Activated B cell treated with CpG ODN at 0.5 μM for 24 hours (primary cell): ENCODE measurements at regions of chr19 and their contacts with region 1.

Region 1: DNA sequence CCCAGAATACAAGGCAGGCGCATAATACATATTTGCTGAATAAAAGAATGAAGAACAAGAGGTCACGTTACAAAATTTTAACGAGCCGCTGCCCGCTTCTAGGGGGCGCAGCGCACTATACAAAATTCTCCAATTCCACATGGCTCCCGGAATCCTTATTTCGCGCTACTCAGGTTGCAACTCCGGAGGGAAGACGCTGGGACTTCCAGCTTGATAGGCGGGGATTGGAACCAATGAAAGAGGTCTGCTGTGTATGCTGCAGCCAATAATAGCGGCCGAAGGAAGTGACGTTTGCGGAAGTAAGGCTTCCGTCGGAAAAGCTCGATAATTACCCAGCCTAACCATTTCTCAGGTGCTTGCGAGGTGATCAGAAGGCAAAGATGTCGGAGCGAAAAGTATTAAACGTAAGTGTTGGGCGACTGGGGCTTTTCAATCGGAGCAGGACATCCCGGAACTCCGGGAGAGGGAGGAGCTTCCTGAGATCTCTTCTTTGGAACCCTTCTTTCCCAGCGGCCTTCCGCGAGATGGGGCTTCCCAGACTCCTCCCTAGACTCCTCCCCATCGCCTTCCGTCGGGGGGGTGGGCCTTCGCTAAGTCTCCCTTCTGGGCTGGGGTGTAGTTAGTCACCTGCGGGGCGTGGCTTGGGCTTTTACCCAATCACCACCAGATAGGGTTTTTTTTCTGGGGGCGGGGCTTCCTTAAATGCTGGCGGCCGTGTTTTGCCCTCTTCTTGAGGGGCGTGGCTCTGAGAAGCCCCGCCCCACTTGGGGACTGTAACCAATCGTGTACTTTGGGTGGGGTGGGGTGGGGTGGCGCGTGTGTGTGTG is at the start of gene YJU2:
- DNase-seq: peak; percentile 89
- ATAC-seq: peak; percentile 96
- H3K4me3 Mint-ChIP-seq: peak within 1 kb of the TSS; percentile 90
- H3K27ac Mint-ChIP-seq: peak within 1 kb of the TSS; percentile 96
- H3K4me1 Mint-ChIP-seq: peaks cover 35% of the 10 kb centered on the region
- H3K27me3 Mint-ChIP-seq: no peaks in the 10 kb centered on the region
- CTCF ChIP-seq: no peak
- total RNA-seq, gene YJU2: 40.7 and 43.0 TPM in 2 replicates

Region 2: DNA sequence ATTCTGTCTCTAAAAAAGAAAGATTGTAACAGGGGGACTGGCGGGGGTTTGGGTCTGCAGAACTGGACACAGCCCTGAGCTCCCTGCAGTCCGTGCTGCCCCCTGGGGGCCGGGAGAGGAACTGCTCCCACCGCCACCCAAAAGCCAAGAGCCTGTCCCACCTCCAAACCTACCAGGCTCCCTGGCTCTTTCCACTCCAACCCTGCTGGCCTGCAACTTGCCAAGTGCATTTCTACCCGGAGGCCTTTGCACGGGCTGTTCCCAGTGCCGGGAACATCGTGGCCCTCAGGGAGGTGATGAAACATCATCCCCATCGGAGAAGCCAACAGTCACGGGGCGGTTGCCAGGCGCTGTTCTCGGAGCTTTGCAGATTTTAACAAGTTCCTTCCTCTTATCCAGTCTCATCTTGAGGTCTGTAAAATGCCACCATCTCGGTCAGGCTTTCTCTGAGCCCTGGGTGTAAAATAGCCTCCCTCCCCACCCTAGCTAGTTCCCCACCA is 817.3 kb before region 1 on chr19:
- CTCF ChIA-PET with region 1: no interaction called
- POLR2A ChIA-PET with region 1: interaction called, 13 read pairs
- intact Hi-C with region 1: no loop called
- DNase-seq: peak; percentile 81
- ATAC-seq: peak; percentile 87
- H3K4me3 Mint-ChIP-seq: no peak overlapping the region
- H3K27ac Mint-ChIP-seq: no peak overlapping the region
- H3K4me1 Mint-ChIP-seq: peaks cover 20% of the 10 kb centered on the region
- H3K27me3 Mint-ChIP-seq: no peaks in the 10 kb centered on the region
- CTCF ChIP-seq: peak; percentile 63

Region 3: GRCh38 chr19:4182084-4182810 is 64.7 kb before region 1 on chr19 and contains the starts of genes ANKRD24 and SIRT6:
- CTCF ChIA-PET with region 1: no interaction called
- POLR2A ChIA-PET with region 1: interaction called, 4 read pairs
- intact Hi-C with region 1: loop called (anchors 1 kb)
- DNase-seq: peak; percentile 96
- ATAC-seq: peak; percentile 84
- H3K4me3 Mint-ChIP-seq: peak within 1 kb of the TSS; percentile 97
- H3K27ac Mint-ChIP-seq: peak within 1 kb of the TSS; percentile 94
- H3K4me1 Mint-ChIP-seq: peaks cover 35% of the 10 kb centered on the region
- H3K27me3 Mint-ChIP-seq: no peaks in the 10 kb centered on the region
- CTCF ChIP-seq: no peak
- total RNA-seq, gene ANKRD24: 0.42 and 0.49 TPM in 2 replicates
- total RNA-seq, gene SIRT6: 34.1 and 36.8 TPM in 2 replicates

Region 4: DNA sequence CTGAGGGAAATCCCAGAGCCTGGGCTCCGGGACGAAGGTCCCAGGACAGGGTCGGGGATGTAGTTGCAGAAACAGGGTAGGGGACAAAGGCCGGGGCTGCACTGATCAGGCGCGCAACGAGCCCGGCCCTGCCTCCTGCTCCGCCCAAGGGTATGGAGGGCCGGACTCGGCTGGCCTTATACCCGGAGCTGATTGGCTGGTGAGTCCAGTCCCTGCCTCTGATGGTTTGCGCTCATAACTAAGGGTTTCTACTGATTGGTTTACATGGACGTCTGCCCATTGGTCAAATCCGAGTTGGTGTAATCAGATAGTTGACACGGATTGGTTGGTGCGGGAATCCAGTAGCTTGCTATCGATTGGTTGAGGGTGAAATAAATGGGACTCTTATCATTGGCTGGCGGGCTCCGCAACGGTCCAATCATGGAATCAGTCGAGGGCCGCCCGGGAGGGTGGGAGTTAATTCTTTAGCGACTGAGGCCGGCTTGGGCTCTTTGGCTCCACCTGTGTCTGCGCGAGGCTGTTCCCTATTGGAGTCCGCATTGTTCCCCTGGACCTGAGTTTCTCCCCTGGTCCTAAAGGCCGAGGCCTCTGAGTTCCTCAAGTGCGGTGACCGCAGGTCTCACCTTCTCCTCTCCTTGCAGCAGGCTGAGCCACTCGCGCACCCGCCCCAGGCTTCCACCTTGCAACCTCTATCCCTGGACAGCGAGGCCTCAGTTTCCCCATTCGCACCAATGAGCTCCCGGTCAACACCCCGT is 95.8 kb after region 1 on chr19:
- CTCF ChIA-PET with region 1: no interaction called
- POLR2A ChIA-PET with region 1: interaction called, 14 read pairs
- intact Hi-C with region 1: loop called (anchors 1 kb)
- DNase-seq: peak; percentile 75
- ATAC-seq: peak; percentile 85
- H3K4me3 Mint-ChIP-seq: peak overlapping the region; percentile 91
- H3K27ac Mint-ChIP-seq: peak overlapping the region; percentile 82
- H3K4me1 Mint-ChIP-seq: peaks cover 35% of the 10 kb centered on the region
- H3K27me3 Mint-ChIP-seq: no peaks in the 10 kb centered on the region
- CTCF ChIP-seq: no peak

Region 5: DNA sequence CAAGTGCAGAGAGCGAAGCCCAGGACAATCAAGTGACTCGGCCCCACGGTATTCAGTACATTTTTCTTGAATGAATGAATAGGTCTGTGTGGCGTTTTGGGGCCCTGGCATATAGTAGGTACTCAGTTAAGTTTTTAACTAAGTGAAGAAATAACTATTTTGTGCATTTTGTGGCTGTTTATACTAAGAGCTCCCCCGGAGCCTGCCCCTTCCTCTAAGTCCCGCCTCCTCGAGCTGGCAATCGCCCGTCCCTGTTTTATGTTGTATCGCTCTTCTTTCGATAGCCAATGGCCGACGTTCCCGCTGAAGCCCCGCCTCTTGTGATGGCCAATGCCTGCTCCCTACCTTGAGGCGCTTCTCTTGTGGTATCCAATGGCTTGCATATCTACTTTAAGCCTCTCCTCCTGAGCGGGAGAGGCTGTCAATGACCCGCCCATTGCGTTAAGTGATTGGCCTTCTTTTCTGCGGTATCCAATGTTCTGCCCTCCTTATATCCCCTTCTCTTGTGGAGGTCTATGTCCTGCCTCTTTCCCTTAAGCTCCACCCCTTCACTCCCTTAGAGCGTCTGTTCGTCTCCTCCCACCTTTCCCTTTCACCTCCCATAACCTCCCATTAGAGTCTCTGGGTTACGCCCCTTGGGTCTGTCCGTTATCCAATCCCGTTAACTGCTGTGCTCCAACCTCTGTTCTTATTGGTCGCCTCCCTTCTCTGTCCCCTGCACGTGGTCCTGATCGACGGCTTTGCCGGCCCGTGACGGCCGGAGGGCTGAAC is 224.6 kb after region 1 on chr19:
- CTCF ChIA-PET with region 1: no interaction called
- POLR2A ChIA-PET with region 1: interaction called, 9 read pairs
- intact Hi-C with region 1: loop called (anchors 1 kb)
- DNase-seq: peak; percentile 83
- ATAC-seq: peak; percentile 86
- H3K4me3 Mint-ChIP-seq: no peak overlapping the region
- H3K27ac Mint-ChIP-seq: no peak overlapping the region
- H3K4me1 Mint-ChIP-seq: peaks cover 22% of the 10 kb centered on the region
- H3K27me3 Mint-ChIP-seq: no peaks in the 10 kb centered on the region
- CTCF ChIP-seq: no peak